ENCODE measurements at regions of chr1 and their contacts with region 1.

Region 1: DNA sequence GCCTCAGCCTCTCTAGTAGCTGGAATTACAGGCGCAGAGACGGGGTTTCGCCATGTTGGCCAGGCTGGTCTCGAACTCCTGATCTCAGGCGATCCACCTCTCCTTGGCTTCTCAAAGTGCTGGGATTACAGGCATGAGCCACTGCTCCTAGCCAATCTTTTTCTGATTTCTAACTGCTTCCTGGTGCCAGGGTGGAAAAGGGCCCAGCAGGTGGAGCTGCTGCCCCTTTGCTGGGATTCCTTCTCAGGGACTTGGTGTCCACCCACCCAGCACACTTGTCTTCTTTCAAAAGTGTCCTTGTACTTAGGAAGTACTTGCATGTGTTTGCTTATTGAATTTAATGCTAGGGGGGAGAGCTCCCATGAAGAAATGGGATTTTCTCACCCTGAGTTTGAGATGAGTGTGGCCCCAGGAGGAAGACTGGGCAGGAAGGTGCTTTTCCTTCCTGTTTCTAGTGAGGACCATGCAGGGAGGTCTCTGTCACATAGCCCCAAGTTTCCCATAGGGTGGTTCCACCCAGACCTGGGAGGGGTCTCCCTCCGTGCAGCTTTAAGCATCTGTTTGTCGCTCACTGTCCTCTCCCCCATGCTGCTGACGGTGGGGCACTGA is 14.2 kb downstream of the UTP11 start:
- DNase-seq: peak; percentile 68
- ATAC-seq: peak; percentile 37
- H3K4me3 ChIP-seq: no peak overlapping the region
- H3K27ac ChIP-seq: no peak overlapping the region
- H3K4me1 ChIP-seq: peaks cover 33% of the 10 kb centered on the region
- H3K27me3 ChIP-seq: no peaks in the 10 kb centered on the region
- CTCF ChIP-seq: peak; percentile 86

Region 2: DNA sequence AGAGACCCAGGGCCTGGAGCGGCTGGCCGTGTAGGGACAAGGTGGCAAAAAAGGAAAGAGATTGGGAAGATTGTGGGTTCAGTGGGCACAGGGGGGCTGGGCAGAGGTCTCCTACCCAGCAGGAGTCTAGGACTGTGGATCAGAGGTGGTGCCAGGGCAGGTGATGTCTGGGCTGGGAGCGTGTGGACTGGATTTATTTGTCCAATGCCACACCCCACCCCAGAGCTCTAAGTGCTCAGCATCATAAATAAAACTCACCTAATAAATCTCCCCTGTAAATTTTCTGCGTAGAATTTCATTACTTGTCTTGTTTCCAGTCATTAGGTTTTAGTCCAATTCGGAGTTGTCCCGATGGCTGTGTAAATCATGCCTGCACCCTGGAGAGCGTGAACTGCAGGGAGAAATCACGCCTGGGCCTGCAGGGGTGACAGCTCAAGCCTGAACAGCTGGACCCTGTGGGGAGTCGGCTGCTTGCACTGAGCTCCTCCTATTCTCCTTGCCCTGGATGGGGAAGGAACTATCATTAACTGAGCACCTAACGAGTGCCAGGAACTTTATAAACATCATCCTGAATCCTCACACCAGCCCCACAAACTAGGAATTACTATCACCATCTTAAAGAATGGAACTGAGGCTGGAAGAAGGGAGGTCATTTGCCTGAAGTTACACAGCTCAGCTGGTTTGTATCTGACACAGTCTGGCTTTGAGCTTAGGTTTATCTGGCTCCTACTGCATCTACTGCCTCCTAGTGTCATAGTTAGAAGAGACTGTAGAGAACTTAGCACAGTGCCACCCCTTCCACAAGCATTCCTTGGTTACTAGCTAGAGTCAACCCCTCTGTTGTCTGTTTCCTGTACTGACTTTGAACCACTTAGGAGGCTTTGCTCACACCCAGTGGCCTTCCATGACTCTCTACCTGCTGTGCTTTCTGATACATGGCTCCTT is 44.9 kb after region 1 on chr1:
- CTCF ChIA-PET with region 1: interaction called, 6 read pairs
- POLR2A ChIA-PET with region 1: no interaction called
- intact Hi-C with region 1: loop called (anchors 1 kb)
- DNase-seq: peak; percentile 38
- ATAC-seq: peak; percentile 86
- H3K4me3 ChIP-seq: no peak overlapping the region
- H3K27ac ChIP-seq: no peak overlapping the region
- H3K4me1 ChIP-seq: no peaks in the 10 kb centered on the region
- H3K27me3 ChIP-seq: peaks cover 48% of the 10 kb centered on the region
- CTCF ChIP-seq: peak; percentile 55

Region 3: GRCh38 chr1:38138498-38139233 is 112.0 kb after region 1 on chr1:
- CTCF ChIA-PET with region 1: no interaction called
- POLR2A ChIA-PET with region 1: interaction called, 3 read pairs
- intact Hi-C with region 1: loop called (anchors 10 kb)
- DNase-seq: peak; percentile 99
- ATAC-seq: peak; percentile 98
- H3K4me3 ChIP-seq: no peak overlapping the region
- H3K27ac ChIP-seq: peak overlapping the region; percentile 52
- H3K4me1 ChIP-seq: peaks cover 37% of the 10 kb centered on the region
- H3K27me3 ChIP-seq: no peaks in the 10 kb centered on the region
- CTCF ChIP-seq: no peak

Region 4: GRCh38 chr1:38152351-38153065 is 125.8 kb after region 1 on chr1:
- CTCF ChIA-PET with region 1: no interaction called
- POLR2A ChIA-PET with region 1: no interaction called
- intact Hi-C with region 1: no loop called
- DNase-seq: peak; percentile 31
- ATAC-seq: peak; percentile 42; the same call in 1 of the 2 replicates
- H3K4me3 ChIP-seq: no peak overlapping the region
- H3K27ac ChIP-seq: no peak overlapping the region
- H3K4me1 ChIP-seq: no peaks in the 10 kb centered on the region
- H3K27me3 ChIP-seq: peaks cover 26% of the 10 kb centered on the region; the same call in 1 of the 2 replicates
- CTCF ChIP-seq: peak; percentile 39

Region 5: DNA sequence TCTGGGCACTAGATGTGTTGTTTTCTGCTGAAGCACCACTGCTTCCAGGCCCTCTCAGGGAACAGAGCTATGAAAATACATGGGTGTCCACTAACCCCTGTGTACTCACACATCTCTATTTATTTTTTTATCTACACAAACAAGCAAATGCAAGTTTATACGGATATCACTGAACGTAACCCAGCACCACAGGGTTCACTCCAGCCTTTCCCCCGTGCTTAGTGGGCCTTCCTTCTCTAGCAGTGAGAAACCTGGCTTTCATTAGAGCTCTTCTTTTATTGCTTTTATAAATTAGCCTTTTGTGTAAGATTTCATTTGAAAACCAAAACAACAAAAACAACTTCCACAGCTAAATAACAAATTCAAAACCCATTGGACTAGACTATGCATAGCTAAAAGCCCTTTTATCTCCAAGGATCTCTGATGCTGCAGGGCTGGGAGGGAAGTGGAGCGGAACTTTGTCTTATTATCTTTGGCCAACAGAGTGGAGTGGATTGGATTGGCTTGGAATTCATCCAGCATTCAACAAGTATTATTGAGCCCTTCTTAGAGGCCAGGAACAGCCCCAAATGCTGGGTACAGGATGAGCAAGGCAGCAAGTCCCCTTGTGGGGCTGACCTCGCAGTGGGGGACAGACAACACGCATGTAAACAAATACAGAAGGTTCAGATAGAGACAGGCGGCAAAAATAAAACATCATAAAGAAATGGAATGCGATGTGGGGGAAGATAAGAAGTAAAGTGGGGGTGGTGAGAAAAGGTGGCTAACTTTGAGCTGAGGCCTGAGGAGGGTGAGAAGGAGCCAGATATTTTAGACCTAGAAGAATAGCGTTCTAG is 391.7 kb after region 1 on chr1:
- CTCF ChIA-PET with region 1: no interaction called
- POLR2A ChIA-PET with region 1: no interaction called
- intact Hi-C with region 1: no loop called
- DNase-seq: no peak
- ATAC-seq: no peak
- H3K4me3 ChIP-seq: no peak overlapping the region
- H3K27ac ChIP-seq: no peak overlapping the region
- H3K4me1 ChIP-seq: no peaks in the 10 kb centered on the region
- H3K27me3 ChIP-seq: peaks cover 28% of the 10 kb centered on the region
- CTCF ChIP-seq: no peak

Region 6: DNA sequence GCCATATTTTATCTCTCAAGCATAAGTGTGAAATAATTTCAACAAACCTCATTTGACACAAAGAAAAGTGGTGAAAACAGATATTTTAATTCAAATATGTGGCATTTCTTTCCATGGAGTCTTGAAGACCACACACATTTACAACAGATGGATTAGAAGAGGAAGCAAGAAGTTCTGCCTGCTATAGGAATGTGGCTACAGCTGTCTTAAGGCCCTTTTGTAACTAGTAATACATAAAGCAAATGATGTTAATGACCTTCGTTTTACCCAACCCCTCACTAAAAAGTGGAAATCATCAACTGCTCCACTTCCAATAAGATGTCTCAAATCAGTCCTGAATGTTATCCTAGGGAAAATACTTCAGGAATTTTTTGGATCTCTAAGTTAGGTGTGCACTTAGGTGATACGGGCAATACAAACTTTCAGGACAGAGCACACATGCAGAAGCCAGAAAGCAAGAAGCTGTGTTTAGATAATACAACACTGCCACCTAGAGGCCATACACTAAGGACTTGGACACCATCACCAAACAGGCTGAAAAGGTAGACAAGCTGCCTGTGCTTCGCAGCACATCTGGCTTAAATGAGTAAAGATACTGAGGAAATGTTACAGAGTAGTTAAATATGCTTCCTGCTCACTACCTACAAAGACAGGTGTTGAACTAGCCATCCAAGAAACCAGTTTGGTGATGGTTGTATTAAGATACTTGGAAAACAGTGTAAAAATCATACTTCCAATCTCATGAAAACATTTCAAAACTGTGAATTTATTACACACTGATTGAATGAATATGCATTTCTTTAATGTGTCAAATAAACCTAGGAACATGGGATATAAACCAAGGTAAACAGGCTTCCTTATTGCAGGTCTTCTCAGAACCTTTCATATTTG is 808.5 kb after region 1 on chr1:
- CTCF ChIA-PET with region 1: interaction called, 6 read pairs
- POLR2A ChIA-PET with region 1: no interaction called
- intact Hi-C with region 1: loop called (anchors 1 kb)
- DNase-seq: peak; percentile 91
- ATAC-seq: peak; percentile 98
- H3K4me3 ChIP-seq: no peak overlapping the region
- H3K27ac ChIP-seq: no peak overlapping the region
- H3K4me1 ChIP-seq: no peaks in the 10 kb centered on the region
- H3K27me3 ChIP-seq: peaks cover 21% of the 10 kb centered on the region
- CTCF ChIP-seq: peak; percentile 91